Heart right ventricle (tissue), 16 donors: ENCODE measurements at regions of chr2 and their contacts with region 1.

Region 1: DNA sequence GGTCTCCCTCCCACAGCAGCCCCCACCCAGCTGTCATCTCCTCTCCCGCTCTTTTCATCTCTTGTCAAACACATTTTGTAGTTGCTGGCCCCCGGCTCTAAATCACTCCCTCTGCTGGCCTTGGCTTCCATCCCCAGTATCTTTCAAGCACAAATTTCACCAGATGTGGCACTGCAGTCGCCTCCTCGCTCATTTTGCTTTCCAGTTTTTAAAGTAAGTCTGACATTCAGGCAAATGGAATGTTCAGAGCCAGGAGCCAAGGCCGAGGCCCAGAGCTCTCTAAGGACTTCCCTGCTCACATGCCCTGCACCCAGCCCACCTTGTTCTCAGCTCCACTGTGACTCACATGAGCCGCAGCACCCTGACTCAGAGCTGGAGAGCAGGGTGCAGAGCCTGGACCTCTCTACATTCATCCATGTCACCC is 158.4 kb downstream of the GALNT14 start:
- DNase-seq: peak in 1 of 2 donors; percentile 29
- ATAC-seq: peak in 7 of 8 donors; percentile 31 to 86 (median 74)
- H3K4me3 ChIP-seq: no peak overlapping the region
- H3K27ac ChIP-seq: peak overlapping the region in 8 of 10 donors; percentile 10 to 73 (median 42)
- H3K4me1 ChIP-seq: peaks cover 0 to 43% (median 15%) of the 10 kb centered on the region in 9 donors
- H3K27me3 ChIP-seq: no peaks in the 10 kb centered on the region
- CTCF ChIP-seq: peak in 7 of 9 donors; percentile 20 to 56 (median 36)

Region 2: DNA sequence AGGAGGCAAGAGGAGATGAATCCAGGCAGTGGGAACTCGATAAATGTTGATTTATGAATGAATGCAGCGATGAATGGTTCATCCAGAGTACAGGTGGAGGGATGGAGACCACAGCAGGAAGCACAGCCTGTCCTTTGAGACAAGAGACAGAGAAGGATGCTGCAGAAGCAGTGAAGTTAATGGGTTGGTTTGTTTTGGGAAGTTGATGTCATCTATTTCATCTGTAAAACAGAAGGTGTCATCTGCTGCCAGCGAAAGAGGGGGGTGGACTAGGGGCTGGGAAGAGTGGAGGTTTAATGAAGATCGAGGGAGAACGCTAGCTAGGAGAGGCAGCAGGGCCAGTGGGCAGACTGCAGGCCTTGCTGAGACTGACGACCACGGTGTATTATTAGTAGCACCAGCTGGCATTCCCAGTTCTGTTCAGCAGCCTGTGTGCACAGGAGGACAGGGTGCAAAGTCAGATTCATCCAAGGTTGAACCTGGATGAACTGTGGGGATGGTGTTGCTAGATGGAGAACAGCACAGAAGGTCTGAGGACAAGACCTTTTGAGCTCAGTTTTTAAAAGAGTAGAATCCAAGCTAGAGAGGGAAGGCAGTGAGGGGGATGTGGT is 52.3 kb before region 1 on chr2:
- intact Hi-C with region 1: no loop called
- DNase-seq: no peak
- ATAC-seq: peak in 5 of 8 donors; percentile 35 to 58 (median 57)
- H3K4me3 ChIP-seq: no peak overlapping the region
- H3K27ac ChIP-seq: no peak overlapping the region
- H3K4me1 ChIP-seq: no peaks in the 10 kb centered on the region
- H3K27me3 ChIP-seq: no peaks in the 10 kb centered on the region
- CTCF ChIP-seq: no peak

Region 3: DNA sequence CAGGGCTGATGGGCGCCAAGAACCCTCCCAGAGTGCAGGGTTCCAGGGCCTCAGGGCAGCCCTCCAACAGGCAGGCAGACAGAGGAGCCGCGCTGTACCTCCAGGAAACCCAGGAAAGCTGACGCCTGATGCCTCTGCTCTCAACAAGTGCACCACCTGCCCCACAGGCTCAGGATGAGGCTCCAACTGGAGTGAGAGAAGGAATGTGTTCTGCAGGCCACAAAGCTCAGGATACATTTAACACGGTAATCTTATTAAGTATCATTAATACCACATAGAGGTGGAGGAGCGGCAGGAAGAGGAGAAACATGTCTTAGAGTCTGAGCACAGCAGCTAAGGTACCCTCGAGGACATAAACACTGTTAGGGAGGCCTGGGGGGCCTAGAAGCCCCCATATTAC is 16.6 kb before region 1 on chr2:
- intact Hi-C with region 1: loop called in 1 of 10 experiments (anchors 2 kb)
- DNase-seq: no peak
- ATAC-seq: no peak
- H3K4me3 ChIP-seq: no peak overlapping the region
- H3K27ac ChIP-seq: no peak overlapping the region
- H3K4me1 ChIP-seq: no peaks in the 10 kb centered on the region
- H3K27me3 ChIP-seq: peaks cover 0 to 11% (median 0%) of the 10 kb centered on the region in 7 donors
- CTCF ChIP-seq: no peak

Region 4: GRCh38 chr2:31151501-31151900 is 171.7 kb after region 1 on chr2:
- intact Hi-C with region 1: no loop called
- DNase-seq: no peak
- ATAC-seq: peak in 1 of 8 donors; percentile 50
- H3K4me3 ChIP-seq: no peak overlapping the region
- H3K27ac ChIP-seq: no peak overlapping the region
- H3K4me1 ChIP-seq: no peaks in the 10 kb centered on the region
- H3K27me3 ChIP-seq: peaks cover 0 to 7% (median 0%) of the 10 kb centered on the region in 7 donors
- CTCF ChIP-seq: no peak

Region 5: GRCh38 chr2:31319406-31320175 is 339.8 kb after region 1 on chr2:
- intact Hi-C with region 1: loop called in 1 of 10 experiments (anchors 10 kb)
- DNase-seq: no peak
- ATAC-seq: peak in 7 of 8 donors; percentile 34 to 77 (median 62)
- H3K4me3 ChIP-seq: no peak overlapping the region
- H3K27ac ChIP-seq: peak overlapping the region in 3 of 10 donors; percentile 8 to 74 (median 14)
- H3K4me1 ChIP-seq: peaks cover 0 to 58% (median 28%) of the 10 kb centered on the region in 9 donors
- H3K27me3 ChIP-seq: no peaks in the 10 kb centered on the region
- CTCF ChIP-seq: no peak

Region 6: GRCh38 chr2:32732912-32733472 is 1753.2 kb after region 1 on chr2:
- intact Hi-C with region 1: no loop called
- DNase-seq: no peak
- ATAC-seq: no peak
- H3K4me3 ChIP-seq: no peak overlapping the region
- H3K27ac ChIP-seq: no peak overlapping the region
- H3K4me1 ChIP-seq: no peaks in the 10 kb centered on the region
- H3K27me3 ChIP-seq: no peaks in the 10 kb centered on the region
- CTCF ChIP-seq: no peak